Endothelial cell of umbilical vein (primary cell): ENCODE measurements at regions of chr13 and their contacts with region 1.

Region 1: DNA sequence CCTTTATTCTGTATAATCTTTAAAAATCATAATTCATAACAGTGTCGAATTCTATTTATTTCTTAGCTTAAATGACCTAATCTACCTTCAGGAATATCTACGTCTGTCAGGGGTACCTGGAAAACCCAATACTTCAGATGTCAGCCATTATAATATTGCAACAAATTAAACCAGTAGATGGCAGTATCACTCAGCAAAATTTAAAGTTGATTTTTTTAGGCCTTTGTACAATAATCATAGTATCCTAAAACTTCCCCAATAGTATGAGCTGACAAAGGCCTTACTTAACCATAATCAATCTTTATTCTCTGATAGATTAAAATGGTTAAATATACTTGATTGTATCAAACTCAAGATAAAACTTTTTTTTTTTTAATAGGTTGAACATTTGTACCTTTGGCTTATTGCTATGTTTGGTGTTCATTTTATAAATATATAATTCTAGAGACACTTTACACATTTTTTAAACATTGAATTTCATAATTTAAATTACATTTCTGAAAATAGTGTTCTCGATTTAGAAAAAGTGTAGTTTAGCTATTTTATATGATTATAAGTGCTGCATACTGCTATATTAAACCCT is 830.2 kb upstream of the SPRY2 start:
- DNase-seq: peak; percentile 32
- H3K4me3 ChIP-seq: no peak overlapping the region
- H3K27ac ChIP-seq: no peak overlapping the region
- H3K4me1 ChIP-seq: no peaks in the 10 kb centered on the region
- H3K27me3 ChIP-seq: no peaks in the 10 kb centered on the region
- CTCF ChIP-seq: peak; percentile 15 to 17
- POLR2A ChIP-seq: no peak

Region 2: DNA sequence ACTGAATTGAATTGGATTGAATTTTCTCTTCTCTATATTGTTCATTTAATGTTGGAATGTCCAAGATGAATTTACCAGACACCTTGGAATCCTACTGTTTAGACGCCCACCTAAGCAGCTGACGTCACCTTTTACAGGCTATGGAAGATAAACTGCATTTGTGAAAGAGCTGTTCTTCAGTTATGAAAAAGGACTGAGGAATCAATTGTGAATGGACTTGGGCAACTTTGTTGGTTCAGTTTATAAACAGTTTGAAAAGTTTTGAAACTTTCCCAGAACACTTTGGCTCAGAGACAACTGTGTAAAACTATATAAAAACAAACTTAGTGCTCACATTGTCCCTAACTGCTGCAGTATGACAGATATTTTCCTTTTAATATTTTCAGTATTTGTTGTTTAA is 239.4 kb before region 1 on chr13:
- CTCF ChIA-PET with region 1: no interaction called
- POLR2A ChIA-PET with region 1: no interaction called
- dilution Hi-C with region 1: no loop called
- intact Hi-C with region 1: no loop called
- DNase-seq: no peak
- H3K4me3 ChIP-seq: no peak overlapping the region
- H3K27ac ChIP-seq: no peak overlapping the region
- H3K4me1 ChIP-seq: no peaks in the 10 kb centered on the region
- H3K27me3 ChIP-seq: no peaks in the 10 kb centered on the region
- CTCF ChIP-seq: no peak
- POLR2A ChIP-seq: no peak

Region 3: DNA sequence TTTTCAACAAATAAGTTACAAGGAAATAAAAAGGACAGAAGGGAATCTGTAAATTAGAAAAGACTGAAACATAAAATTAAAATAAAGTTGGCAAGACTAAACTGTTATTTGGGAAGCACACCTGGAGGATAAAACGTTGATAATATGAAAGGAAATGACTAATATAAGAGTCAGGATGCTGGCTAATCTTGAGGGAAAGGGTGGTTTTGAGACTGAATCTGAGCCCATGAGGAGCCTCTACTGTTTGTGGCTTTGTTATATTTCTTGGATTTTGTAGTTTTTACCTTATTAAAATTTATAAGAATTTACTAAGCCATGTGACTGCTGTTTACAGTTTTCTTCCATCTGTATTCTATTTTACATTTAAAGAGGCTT is 112.3 kb before region 1 on chr13:
- CTCF ChIA-PET with region 1: no interaction called
- POLR2A ChIA-PET with region 1: no interaction called
- dilution Hi-C with region 1: no loop called
- intact Hi-C with region 1: loop called (anchors 1 kb)
- DNase-seq: peak; percentile 46
- H3K4me3 ChIP-seq: no peak overlapping the region
- H3K27ac ChIP-seq: peak overlapping the region; percentile 32
- H3K4me1 ChIP-seq: peaks cover 13% of the 10 kb centered on the region
- H3K27me3 ChIP-seq: no peaks in the 10 kb centered on the region
- CTCF ChIP-seq: no peak
- POLR2A ChIP-seq: no peak

Region 4: DNA sequence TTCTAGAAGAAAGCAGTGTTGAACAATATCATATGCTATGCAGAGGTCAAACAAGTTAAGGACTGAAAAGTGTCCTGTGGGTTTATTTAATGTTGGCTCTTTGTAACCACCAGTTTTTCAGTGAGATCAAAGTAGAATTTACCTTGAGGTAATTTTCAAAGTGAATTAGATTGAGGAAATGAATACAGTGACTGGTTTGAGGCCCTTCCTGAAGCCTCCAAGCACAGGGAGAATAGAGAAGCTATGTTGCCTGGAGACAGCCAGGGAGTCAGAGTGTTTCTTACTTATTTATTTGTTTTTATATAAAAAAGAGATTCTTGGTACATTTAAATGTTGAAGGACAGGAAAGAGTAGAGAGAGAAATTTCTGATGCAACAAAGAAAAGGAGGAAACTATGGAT is 124.0 kb after region 1 on chr13:
- CTCF ChIA-PET with region 1: no interaction called
- POLR2A ChIA-PET with region 1: no interaction called
- dilution Hi-C with region 1: no loop called
- intact Hi-C with region 1: no loop called
- DNase-seq: no peak
- H3K4me3 ChIP-seq: no peak overlapping the region
- H3K27ac ChIP-seq: no peak overlapping the region
- H3K4me1 ChIP-seq: no peaks in the 10 kb centered on the region
- H3K27me3 ChIP-seq: no peaks in the 10 kb centered on the region
- CTCF ChIP-seq: no peak
- POLR2A ChIP-seq: no peak

Region 5: GRCh38 chr13:81487151-81487550 is 316.0 kb after region 1 on chr13:
- CTCF ChIA-PET with region 1: no interaction called
- POLR2A ChIA-PET with region 1: no interaction called
- dilution Hi-C with region 1: no loop called
- intact Hi-C with region 1: loop called (anchors 2 kb)
- DNase-seq: no peak
- H3K4me3 ChIP-seq: no peak overlapping the region
- H3K27ac ChIP-seq: no peak overlapping the region
- H3K4me1 ChIP-seq: no peaks in the 10 kb centered on the region
- H3K27me3 ChIP-seq: no peaks in the 10 kb centered on the region
- CTCF ChIP-seq: no peak
- POLR2A ChIP-seq: no peak

Region 6: DNA sequence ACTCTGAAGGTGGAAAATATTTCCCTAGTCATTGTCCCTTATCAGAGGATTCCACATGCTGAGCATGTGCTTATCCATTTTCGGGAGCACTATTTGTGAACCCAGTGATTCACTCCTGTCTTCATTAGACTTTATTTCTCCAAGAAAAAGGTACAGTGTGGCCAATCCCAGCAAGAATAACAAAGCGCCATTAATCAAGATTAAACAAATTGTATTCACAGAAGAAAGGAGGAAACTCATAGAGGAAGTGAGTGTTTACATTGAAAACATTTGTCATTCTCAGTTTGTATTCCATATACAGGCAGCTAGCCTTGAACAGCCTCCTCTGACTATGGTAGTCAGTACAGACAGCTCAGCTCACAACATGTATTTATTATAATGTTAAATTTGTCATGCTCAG is 839.6 kb after region 1 on chr13:
- CTCF ChIA-PET with region 1: no interaction called
- POLR2A ChIA-PET with region 1: no interaction called
- dilution Hi-C with region 1: no loop called
- intact Hi-C with region 1: loop called (anchors 10 kb)
- DNase-seq: peak; percentile 92
- H3K4me3 ChIP-seq: no peak overlapping the region
- H3K27ac ChIP-seq: peak overlapping the region; percentile 92
- H3K4me1 ChIP-seq: peaks cover 21% of the 10 kb centered on the region
- H3K27me3 ChIP-seq: no peaks in the 10 kb centered on the region
- CTCF ChIP-seq: no peak
- POLR2A ChIP-seq: peak; percentile 38

Region 7: DNA sequence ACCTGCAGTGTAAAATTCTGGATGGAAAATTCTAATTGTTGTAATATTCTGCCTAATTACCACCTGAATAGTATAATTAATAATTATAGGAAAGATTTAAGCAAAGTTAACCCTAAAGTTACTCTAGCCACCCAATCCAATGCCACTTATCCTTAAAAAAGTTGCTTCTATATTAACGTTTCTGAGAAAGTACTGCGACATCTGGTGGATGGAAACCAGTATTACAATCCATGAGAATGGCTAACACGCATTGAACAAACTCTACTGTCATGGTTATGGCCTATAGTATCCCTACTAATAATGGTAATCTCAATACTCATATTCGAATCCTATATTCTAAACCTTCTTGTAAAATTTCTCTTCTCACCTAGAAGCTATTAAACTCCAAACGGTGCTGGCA is 1159.3 kb after region 1 on chr13:
- CTCF ChIA-PET with region 1: interaction called, 12 read pairs
- POLR2A ChIA-PET with region 1: no interaction called
- dilution Hi-C with region 1: no loop called
- intact Hi-C with region 1: loop called (anchors 2 kb)
- DNase-seq: peak; percentile 21
- H3K4me3 ChIP-seq: no peak overlapping the region
- H3K27ac ChIP-seq: no peak overlapping the region
- H3K4me1 ChIP-seq: no peaks in the 10 kb centered on the region
- H3K27me3 ChIP-seq: no peaks in the 10 kb centered on the region
- CTCF ChIP-seq: peak; percentile 14 to 35
- POLR2A ChIP-seq: no peak